ENCODE measurements at regions of chr6 and their contacts with region 1.

Region 1: DNA sequence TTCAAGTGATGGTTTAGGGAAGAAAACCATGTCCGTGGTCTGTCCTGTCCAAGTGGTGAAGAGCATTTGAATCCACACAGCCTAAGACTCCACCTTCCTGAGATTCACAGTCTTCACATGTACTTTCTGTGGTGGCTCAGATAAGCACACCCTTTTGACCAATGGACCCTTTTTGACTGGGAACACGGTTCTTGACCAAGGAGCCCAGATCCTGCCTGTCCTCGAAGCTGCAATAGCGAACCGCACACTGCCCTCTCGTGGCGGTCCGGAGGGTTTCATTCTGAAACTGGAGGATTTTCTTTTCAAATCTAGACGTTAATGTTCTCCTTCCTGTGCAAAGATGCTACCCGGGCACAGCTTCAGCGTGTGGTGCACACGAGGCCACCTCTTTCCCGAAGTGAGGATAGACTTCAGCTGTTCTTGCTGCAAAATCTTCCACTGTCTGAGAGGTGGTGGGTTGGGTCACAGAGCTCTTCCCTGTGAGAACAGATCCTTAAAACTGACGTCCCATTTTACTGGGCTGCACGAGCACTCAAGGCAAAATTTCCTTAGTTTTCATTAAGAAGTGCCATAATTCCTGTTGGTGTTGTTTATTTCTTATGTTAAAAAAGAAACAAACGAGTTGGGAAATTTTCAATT is 90.5 kb downstream of the SYNJ2 start:
- DNase-seq: peak; percentile 75
- ATAC-seq: peak; percentile 79
- H3K4me3 Mint-ChIP-seq: no peak overlapping the region
- H3K27ac Mint-ChIP-seq: peak overlapping the region; percentile 61; the same call in 1 of the 2 replicates
- H3K4me1 Mint-ChIP-seq: peaks cover 12% of the 10 kb centered on the region
- H3K27me3 Mint-ChIP-seq: no peaks in the 10 kb centered on the region
- CTCF ChIP-seq: peak; percentile 83

Region 2: DNA sequence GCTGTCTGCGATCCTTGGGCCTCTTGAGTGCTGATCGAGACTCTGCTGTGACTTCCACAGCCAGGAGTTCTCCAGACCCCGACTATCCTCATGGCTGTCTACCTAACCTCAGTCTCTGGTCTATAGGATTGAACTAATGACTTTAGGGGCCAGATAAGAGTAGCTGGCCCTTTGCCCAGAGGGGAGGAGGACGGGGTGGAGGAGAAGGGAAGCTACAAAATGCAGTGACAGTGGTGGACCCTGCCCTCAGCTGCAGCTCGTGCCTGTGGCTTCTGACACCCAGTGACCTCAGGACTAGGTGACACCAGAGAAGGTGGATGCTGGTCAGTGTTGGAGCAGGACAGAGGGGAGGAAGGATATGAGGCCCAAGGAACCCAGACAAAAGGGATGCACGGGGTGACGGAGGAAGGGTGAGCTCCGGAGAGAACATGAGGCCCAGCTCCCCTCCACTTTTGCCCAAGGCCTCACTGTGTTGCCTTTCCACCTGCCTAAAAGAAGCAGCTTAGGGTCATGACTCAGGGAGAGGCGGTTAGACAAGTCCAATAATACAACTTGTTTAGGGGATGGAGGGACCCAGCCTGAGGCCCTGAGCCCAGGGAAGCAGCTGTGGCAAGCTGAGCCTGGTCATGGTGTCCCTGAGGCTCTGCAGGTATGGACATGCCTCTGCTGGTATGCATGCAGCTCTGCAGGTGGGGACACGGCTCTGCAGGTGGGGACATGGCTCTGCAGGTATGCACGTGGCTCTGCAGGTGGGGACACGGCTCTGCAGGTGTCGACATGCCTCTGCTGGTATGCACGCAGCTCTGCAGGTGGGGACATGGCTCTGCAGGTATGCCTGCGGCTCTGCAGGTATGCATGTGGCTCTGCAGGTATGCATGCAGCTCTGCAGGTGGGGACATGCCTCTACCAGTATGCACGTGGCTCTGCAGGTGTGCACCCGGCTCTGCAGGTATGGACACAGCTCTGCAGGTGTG is 22.9 kb before region 1 on chr6:
- CTCF ChIA-PET with region 1: interaction called, 11 read pairs
- POLR2A ChIA-PET with region 1: no interaction called
- DNase-seq: no peak
- ATAC-seq: no peak
- H3K4me3 Mint-ChIP-seq: no peak overlapping the region
- H3K27ac Mint-ChIP-seq: no peak overlapping the region; the same call in 1 of the 2 replicates
- H3K4me1 Mint-ChIP-seq: peaks cover 8% of the 10 kb centered on the region
- H3K27me3 Mint-ChIP-seq: no peaks in the 10 kb centered on the region
- CTCF ChIP-seq: no peak

Region 3: DNA sequence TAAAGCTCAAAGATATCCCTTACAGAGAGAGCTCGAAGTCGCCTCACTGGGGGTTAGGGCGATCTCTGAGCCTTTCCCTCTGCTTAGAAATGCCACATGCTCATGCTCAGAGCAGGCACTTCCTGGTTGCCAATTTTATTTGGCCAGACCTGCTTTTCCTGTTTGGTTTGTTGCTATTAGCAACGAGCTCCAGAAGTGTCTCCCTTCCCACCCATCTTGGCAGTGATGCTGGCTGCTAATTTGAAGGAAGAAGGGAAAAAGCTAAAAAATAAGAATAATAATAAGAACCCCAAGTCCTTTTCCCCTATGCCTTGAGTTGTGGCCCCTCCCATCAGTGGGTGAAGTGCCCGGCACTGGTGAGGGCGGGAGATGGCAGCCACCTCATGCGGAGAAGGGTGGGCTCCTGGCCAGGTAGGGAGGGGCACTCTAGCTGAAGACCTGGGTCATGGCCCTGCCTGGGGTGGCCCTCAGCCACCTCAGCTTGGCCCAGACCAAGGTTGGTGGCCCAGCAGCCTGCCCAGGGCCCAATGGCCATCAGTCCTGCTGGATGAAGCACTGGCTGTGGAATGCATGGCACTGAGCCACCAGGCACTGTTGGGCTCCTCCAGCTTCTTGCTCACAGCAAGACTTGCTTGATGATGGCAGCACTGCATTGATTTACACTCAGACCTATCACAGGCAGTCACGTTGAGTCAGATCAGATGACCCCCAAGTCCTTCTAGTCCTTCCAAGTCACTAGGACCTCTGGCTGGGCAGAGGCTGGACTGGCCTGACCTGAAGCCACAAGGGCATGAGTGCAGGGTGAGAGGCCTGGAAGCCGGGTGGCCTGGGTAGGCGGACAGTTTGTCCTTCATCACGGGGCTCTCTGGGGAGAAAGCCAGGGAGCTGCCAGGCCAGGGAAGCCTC is 11.5 kb before region 1 on chr6:
- CTCF ChIA-PET with region 1: interaction called, 13 read pairs
- POLR2A ChIA-PET with region 1: no interaction called
- DNase-seq: no peak
- ATAC-seq: peak; percentile 66
- H3K4me3 Mint-ChIP-seq: no peak overlapping the region
- H3K27ac Mint-ChIP-seq: no peak overlapping the region
- H3K4me1 Mint-ChIP-seq: peaks cover 6% of the 10 kb centered on the region; the same call in 1 of the 2 replicates
- H3K27me3 Mint-ChIP-seq: no peaks in the 10 kb centered on the region
- CTCF ChIP-seq: no peak

Region 4: DNA sequence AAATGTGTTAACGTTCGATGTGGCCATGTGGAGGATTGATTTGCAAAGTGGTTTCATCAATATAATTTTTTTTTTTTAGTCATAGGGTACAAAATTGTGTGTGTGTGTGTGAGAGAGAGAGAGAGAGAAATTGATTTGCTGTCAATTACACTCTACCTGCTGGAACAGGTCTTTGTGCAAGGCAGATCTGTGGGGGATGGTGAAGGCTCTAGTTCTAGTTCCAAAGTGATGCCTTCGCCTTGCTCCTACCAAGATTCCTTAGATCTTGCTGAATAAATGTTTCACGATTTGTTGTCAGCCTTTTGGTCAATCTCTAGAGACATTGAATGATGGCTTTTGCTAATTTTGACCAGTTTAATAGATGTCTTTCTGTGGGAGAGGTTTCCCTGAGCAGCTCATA is 31.0 kb after region 1 on chr6:
- CTCF ChIA-PET with region 1: no interaction called
- POLR2A ChIA-PET with region 1: no interaction called
- DNase-seq: no peak
- ATAC-seq: no peak
- H3K4me3 Mint-ChIP-seq: no peak overlapping the region
- H3K27ac Mint-ChIP-seq: no peak overlapping the region
- H3K4me1 Mint-ChIP-seq: no peaks in the 10 kb centered on the region
- H3K27me3 Mint-ChIP-seq: no peaks in the 10 kb centered on the region; the same call in 1 of the 2 replicates
- CTCF ChIP-seq: no peak

Measured in WTC11 (cell line).